Activated CD8-positive, alpha-beta T cell treated with anti-CD3 and anti-CD28 coated beads, Interleukin-2, amount 10 ng/mL, durations not matched to agents 7 days and 5 days (primary cell): ENCODE measurements at regions of chr7 and their contacts with region 1.

Region 1: GRCh38 chr7:4883374-4884144 is at the start of gene RADIL:
- DNase-seq: peak; percentile 93
- ATAC-seq: peak; percentile 97
- H3K4me3 Mint-ChIP-seq: peak within 1 kb of the TSS; percentile 51
- H3K27ac Mint-ChIP-seq: no peak within 1 kb of the TSS
- H3K4me1 Mint-ChIP-seq: peaks cover 7% of the 10 kb centered on the region
- H3K27me3 Mint-ChIP-seq: peaks cover 20% of the 10 kb centered on the region
- total RNA-seq, gene RADIL: 0.50 to 0.82 TPM

Region 2: DNA sequence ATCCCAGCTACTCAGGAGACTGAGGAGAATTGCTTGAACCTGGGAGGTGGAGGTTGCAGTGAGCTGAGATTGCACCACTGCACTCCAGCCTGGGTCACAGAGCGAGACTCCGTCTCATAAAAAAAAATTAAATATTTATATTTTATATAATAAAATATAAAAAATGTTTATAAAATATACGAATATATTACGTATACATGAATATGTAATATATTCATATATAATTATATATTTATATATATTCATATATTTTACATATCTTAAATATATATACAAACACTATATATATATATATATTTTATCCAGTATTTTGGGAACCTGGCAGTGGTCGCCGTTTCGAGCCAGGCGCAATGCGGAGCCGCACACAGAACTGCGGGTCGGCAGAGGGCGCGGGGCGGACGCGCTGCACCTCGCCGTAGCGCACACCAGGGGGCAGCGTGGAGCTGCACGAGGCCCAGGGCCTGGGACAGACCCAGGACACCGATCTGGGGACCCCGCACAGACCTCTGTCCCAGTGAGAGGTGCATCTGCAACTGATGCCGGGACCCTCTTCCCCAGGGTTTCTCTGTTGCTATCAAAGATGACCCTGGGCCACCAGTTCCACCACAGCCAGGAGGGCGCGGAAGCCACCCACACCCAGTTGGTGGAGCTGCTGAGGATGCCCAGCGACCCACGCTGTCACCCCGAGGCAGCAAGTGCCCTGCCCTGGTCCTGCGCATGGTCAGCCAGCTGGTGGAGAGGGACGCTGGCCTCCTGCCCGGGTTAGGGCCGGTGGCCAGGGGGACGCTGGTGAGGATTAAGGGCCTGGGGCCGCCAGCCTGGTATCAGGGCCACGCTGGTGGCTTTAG is 85.5 kb before region 1 on chr7:
- CTCF ChIA-PET with region 1: interaction called, 21 read pairs
- POLR2A ChIA-PET with region 1: no interaction called
- DNase-seq: peak; percentile 68
- ATAC-seq: peak; percentile 84
- H3K4me3 Mint-ChIP-seq: no peak overlapping the region
- H3K27ac Mint-ChIP-seq: no peak overlapping the region
- H3K4me1 Mint-ChIP-seq: no peaks in the 10 kb centered on the region
- H3K27me3 Mint-ChIP-seq: no peaks in the 10 kb centered on the region

Region 3: DNA sequence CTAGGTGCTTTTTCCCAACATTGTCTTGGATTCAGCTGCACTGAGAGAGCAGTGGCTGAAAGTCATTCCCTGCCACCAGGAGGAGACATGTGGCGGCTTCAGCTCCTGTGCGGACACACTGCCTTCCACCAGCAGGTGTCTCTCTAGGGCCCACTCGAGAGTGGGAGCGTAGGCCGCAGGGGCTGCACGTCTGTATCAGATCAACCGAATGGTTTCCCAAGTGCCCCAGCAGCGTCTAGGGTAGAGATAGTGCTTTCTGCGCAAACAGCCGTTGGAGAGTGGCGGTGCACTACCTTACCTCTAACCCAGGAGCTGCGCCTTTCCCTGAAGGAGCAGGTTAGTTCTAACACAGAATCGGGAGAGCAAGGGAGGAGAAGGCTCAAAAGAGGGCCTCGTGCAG is 53.4 kb before region 1 on chr7:
- CTCF ChIA-PET with region 1: interaction called, 10 read pairs
- POLR2A ChIA-PET with region 1: no interaction called
- DNase-seq: peak; percentile 74
- ATAC-seq: peak; percentile 91
- H3K4me3 Mint-ChIP-seq: no peak overlapping the region
- H3K27ac Mint-ChIP-seq: no peak overlapping the region
- H3K4me1 Mint-ChIP-seq: no peaks in the 10 kb centered on the region
- H3K27me3 Mint-ChIP-seq: peaks cover 1% of the 10 kb centered on the region

Region 4: DNA sequence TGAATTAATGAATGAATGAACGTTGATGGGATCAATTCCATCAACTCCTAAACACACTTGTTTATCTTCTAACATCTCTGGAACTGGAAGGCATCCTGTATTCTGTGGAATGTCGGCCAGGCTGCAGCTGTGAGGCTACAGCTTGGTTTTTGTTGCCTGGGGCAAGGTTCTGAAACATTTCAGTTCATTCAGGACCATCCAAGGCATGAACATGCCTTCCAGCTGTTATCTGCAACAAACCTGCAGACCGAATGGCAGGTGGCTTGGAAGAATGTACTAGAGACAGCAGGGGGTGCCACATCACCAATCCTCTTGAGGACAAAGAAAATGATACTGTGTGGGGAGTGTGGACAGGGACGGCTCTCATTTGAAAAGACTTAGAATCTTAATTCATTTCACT is 34.2 kb before region 1 on chr7:
- CTCF ChIA-PET with region 1: interaction called, 26 read pairs
- POLR2A ChIA-PET with region 1: no interaction called
- DNase-seq: peak; percentile 56
- ATAC-seq: peak; percentile 58
- H3K4me3 Mint-ChIP-seq: no peak overlapping the region
- H3K27ac Mint-ChIP-seq: no peak overlapping the region
- H3K4me1 Mint-ChIP-seq: peaks cover 14% of the 10 kb centered on the region
- H3K27me3 Mint-ChIP-seq: peaks cover 10% of the 10 kb centered on the region

Region 5: GRCh38 chr7:4866528-4867496 is 16.7 kb before region 1 on chr7:
- CTCF ChIA-PET with region 1: interaction called, 11 read pairs
- POLR2A ChIA-PET with region 1: interaction called, 4 read pairs
- DNase-seq: no peak
- ATAC-seq: no peak
- H3K4me3 Mint-ChIP-seq: no peak overlapping the region
- H3K27ac Mint-ChIP-seq: no peak overlapping the region
- H3K4me1 Mint-ChIP-seq: peaks cover 15% of the 10 kb centered on the region
- H3K27me3 Mint-ChIP-seq: peaks cover 39% of the 10 kb centered on the region